ENCODE measurements at regions of chr9 and their contacts with region 1.

Region 1: DNA sequence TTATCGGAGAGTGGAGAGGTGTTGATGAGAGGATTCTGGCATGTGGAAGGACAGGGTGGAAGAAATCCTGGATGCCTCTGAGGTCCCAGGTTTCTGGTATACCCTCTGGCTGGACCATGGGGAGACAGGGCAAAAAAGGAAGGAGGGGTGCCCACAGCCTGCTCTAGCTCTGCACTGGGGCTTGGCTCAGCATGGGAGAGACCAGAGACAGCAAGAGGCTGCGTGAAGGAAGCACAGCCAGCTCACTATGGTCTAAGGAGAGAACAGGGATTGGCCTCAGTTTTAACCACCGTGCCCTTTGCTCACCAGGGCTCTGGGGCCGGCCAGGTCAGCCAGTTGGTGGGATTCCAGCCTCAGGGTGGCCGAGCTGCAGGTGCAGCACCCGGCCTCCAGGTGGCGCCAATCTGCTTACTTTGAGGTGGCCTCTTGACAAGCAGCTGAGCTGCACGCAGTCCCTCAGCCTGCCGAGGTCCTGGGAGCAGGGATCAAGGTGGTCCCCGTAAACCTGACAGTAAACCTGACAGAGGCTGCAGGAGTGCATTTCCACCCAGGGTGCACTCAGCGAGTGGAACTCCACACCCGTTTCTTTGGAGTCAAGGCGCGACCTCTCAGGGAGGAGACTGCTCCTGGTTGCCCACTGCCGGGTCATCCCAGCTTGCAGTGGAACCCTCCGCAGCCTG is 25.0 kb upstream of the SPTLC1 start:
- DNase-seq: peak; percentile 73
- ATAC-seq: peak; percentile 52
- H3K4me3 ChIP-seq: peak overlapping the region; percentile 58; the same call in 1 of the 2 replicates
- H3K27ac ChIP-seq: no peak overlapping the region
- H3K4me1 ChIP-seq: peaks cover 5% of the 10 kb centered on the region; the same call in 1 of the 2 replicates
- H3K27me3 ChIP-seq: no peaks in the 10 kb centered on the region
- CTCF ChIP-seq: peak; percentile 78

Region 2: DNA sequence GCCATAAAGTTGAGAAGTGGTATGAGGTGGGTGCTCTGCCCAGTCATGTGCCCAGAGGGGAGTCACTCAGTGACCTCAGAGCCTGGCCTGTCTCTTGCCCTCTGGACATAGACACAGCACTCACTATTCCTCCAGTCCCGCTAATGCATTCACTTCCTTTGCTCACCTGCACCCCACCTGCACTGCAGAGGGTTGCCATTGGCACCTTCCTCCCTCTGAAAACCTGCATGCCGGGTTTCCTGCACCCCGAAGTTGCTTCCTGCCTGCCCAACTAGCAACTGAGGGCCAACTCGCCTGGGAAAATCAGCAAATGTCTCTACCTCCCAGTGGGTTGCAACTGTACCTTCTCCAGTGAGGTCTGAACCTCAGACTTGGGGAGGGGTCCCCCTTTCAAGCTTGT is 23.1 kb after region 1 on chr9:
- CTCF ChIA-PET with region 1: no interaction called
- POLR2A ChIA-PET with region 1: no interaction called
- intact Hi-C with region 1: loop called (anchors 2 kb)
- DNase-seq: no peak
- ATAC-seq: no peak
- H3K4me3 ChIP-seq: no peak overlapping the region
- H3K27ac ChIP-seq: no peak overlapping the region
- H3K4me1 ChIP-seq: 0 out of 2 replicates have a peak, but pooled peaks cover under 1% of the 10 kb centered on the region
- H3K27me3 ChIP-seq: no peaks in the 10 kb centered on the region
- CTCF ChIP-seq: no peak

Region 3: DNA sequence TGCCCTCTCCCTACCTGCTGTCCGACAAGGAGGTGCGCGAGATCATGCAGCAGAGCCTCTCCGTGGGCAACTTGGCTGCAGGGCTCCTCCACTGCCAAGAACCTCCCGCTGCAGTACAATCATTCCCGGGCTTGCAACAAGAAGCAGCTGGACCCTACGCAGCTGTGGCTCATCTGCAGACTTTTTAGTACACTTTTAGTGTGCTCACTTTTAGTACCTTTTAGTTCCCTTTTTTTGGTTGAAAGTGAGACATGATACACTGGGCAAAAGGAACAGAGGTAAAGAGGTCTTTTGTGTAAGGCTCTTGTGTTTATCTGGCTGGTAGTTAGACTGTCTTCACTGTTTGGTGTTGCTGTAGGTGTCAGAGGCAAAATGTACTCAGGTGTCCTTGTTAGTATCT is 33.1 kb after region 1 on chr9:
- CTCF ChIA-PET with region 1: no interaction called
- POLR2A ChIA-PET with region 1: no interaction called
- intact Hi-C with region 1: no loop called
- DNase-seq: no peak
- ATAC-seq: no peak
- H3K4me3 ChIP-seq: no peak overlapping the region
- H3K27ac ChIP-seq: no peak overlapping the region
- H3K4me1 ChIP-seq: no peaks in the 10 kb centered on the region
- H3K27me3 ChIP-seq: no peaks in the 10 kb centered on the region
- CTCF ChIP-seq: no peak

Region 4: GRCh38 chr9:92206488-92206887 is 66.3 kb after region 1 on chr9:
- CTCF ChIA-PET with region 1: no interaction called
- POLR2A ChIA-PET with region 1: interaction called, 3 read pairs
- intact Hi-C with region 1: loop called (anchors 5 kb)
- DNase-seq: peak; percentile 4
- ATAC-seq: peak; percentile 59; the same call in 1 of the 2 replicates
- H3K4me3 ChIP-seq: no peak overlapping the region
- H3K27ac ChIP-seq: no peak overlapping the region
- H3K4me1 ChIP-seq: no peaks in the 10 kb centered on the region
- H3K27me3 ChIP-seq: no peaks in the 10 kb centered on the region
- CTCF ChIP-seq: no peak

Region 5: GRCh38 chr9:92232190-92232589 is 92.0 kb after region 1 on chr9:
- CTCF ChIA-PET with region 1: no interaction called
- POLR2A ChIA-PET with region 1: no interaction called
- intact Hi-C with region 1: loop called (anchors 2 kb)
- DNase-seq: no peak
- ATAC-seq: no peak
- H3K4me3 ChIP-seq: no peak overlapping the region
- H3K27ac ChIP-seq: no peak overlapping the region
- H3K4me1 ChIP-seq: no peaks in the 10 kb centered on the region
- H3K27me3 ChIP-seq: no peaks in the 10 kb centered on the region
- CTCF ChIP-seq: no peak

Measured in PC-3 (cell line).